Breast epithelium (tissue), 4 donors: ENCODE measurements at regions of chr11 and their contacts with region 1.

Region 1: GRCh38 chr11:10933455-10934292 is 75.8 kb upstream of the ZBED5 start:
- DNase-seq: peak; percentile 91 to 93
- H3K4me3 ChIP-seq: peak overlapping the region; percentile 32 to 66 (median 50)
- H3K27ac ChIP-seq: peak overlapping the region; percentile 81 to 82
- H3K4me1 ChIP-seq: no peaks in the 10 kb centered on the region
- H3K27me3 ChIP-seq: no peaks in the 10 kb centered on the region
- CTCF ChIP-seq: peak; percentile 96 to 99 (median 98)
- POLR2A ChIP-seq: no peak

Region 2: GRCh38 chr11:10906513-10906912 is 27.2 kb before region 1 on chr11:
- intact Hi-C with region 1: no loop called
- DNase-seq: no peak
- H3K4me3 ChIP-seq: no peak overlapping the region
- H3K27ac ChIP-seq: no peak overlapping the region
- H3K4me1 ChIP-seq: no peaks in the 10 kb centered on the region
- H3K27me3 ChIP-seq: no peaks in the 10 kb centered on the region
- CTCF ChIP-seq: no peak
- POLR2A ChIP-seq: no peak

Region 3: GRCh38 chr11:11010624-11011127 is 77.0 kb after region 1 on chr11:
- intact Hi-C with region 1: loop called (anchors 10 kb)
- DNase-seq: no peak
- H3K4me3 ChIP-seq: no peak overlapping the region
- H3K27ac ChIP-seq: no peak overlapping the region
- H3K4me1 ChIP-seq: no peaks in the 10 kb centered on the region
- H3K27me3 ChIP-seq: peaks cover 0 to 6% of the 10 kb centered on the region in 2 donors
- CTCF ChIP-seq: peak in 1 of 3 donors; percentile 17
- POLR2A ChIP-seq: no peak